ENCODE measurements at regions of chr16 and their contacts with region 1.

Region 1: DNA sequence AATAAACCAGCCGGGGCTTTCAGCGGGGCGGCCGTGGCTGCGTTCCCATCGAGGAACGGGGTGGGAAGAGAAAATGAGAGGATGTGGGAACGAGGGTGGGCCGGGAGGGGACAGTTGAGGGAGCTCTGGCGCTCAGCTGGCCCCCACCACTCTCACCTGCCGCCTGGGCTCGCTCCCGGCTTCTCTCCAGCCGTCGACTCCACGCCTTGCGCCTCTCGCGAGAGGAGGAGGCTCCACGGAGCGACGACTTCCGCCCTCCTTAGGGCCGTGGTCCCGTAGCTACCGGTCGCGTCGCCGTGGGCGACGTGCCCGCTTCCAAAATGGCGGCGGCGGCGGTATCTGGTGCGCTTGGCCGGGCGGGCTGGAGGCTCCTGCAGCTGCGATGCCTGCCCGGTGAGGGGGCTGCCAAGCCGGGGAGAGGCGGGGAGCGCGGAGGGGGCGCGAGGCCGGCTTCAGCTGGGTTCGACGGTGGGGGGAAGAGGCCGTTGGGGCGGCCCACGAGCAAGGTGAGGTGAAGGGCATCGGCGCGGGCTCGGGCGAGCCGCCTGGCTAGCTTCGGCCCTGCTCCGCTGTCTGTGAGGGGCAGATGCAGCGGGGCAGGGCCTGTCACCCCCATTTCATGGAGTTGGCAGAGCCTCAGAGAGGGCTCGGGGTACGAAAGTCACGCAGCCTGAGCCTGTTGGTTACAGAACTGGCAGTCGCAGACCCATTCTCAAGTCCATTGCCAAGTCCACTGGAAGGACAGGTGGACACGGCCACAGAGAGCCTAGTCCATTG is at the starts of genes CIAPIN1 and COQ9:
- DNase-seq: peak; percentile 83 to 97 (median 92)
- ATAC-seq: peak; percentile 99
- H3K4me3 ChIP-seq: peak within 1 kb of the TSS; percentile 96
- H3K4me3 Mint-ChIP-seq: peak within 1 kb of the TSS; percentile 96
- H3K27ac ChIP-seq: peak within 1 kb of the TSS; percentile 73 to 79
- H3K27ac Mint-ChIP-seq: peak within 1 kb of the TSS; percentile 88
- H3K4me1 ChIP-seq: peaks cover 29% of the 10 kb centered on the region
- H3K4me1 Mint-ChIP-seq: peaks cover 34% of the 10 kb centered on the region
- H3K27me3 ChIP-seq: no peaks in the 10 kb centered on the region
- H3K27me3 Mint-ChIP-seq: no peaks in the 10 kb centered on the region
- CTCF ChIP-seq: no peak
- total RNA-seq, gene CIAPIN1: 27.8 to 28.0 TPM
- total RNA-seq, gene COQ9: 7.0 to 7.6 TPM

Region 2: GRCh38 chr16:57432989-57433388 is 14.4 kb before region 1 on chr16:
- CTCF ChIA-PET with region 1: interaction called, 3 read pairs
- POLR2A ChIA-PET with region 1: interaction called, 18 read pairs
- intact Hi-C with region 1: no loop called
- DNase-seq: peak in 1 of 14 experiments; percentile 43
- ATAC-seq: peak; percentile 41
- H3K4me3 ChIP-seq: no peak overlapping the region
- H3K4me3 Mint-ChIP-seq: no peak overlapping the region
- H3K27ac ChIP-seq: peak overlapping the region in 1 of 2 donors; percentile 38
- H3K27ac Mint-ChIP-seq: peak overlapping the region; percentile 84
- H3K4me1 ChIP-seq: peaks cover 22% of the 10 kb centered on the region
- H3K4me1 Mint-ChIP-seq: peaks cover 35% of the 10 kb centered on the region
- H3K27me3 ChIP-seq: no peaks in the 10 kb centered on the region
- H3K27me3 Mint-ChIP-seq: no peaks in the 10 kb centered on the region
- CTCF ChIP-seq: no peak

Measured in CD4-positive, alpha-beta T cell (primary cell).